Left lung (tissue), 14 donors: ENCODE measurements at regions of chr12 and their contacts with region 1.

Region 1: GRCh38 chr12:14739489-14739888 is 43.1 kb upstream of the GUCY2C start:
- DNase-seq: no peak
- ATAC-seq: no peak
- H3K4me3 ChIP-seq: no peak overlapping the region
- H3K27ac ChIP-seq: no peak overlapping the region
- H3K4me1 ChIP-seq: no peaks in the 10 kb centered on the region
- H3K27me3 ChIP-seq: no peaks in the 10 kb centered on the region
- CTCF ChIP-seq: no peak

Region 2: DNA sequence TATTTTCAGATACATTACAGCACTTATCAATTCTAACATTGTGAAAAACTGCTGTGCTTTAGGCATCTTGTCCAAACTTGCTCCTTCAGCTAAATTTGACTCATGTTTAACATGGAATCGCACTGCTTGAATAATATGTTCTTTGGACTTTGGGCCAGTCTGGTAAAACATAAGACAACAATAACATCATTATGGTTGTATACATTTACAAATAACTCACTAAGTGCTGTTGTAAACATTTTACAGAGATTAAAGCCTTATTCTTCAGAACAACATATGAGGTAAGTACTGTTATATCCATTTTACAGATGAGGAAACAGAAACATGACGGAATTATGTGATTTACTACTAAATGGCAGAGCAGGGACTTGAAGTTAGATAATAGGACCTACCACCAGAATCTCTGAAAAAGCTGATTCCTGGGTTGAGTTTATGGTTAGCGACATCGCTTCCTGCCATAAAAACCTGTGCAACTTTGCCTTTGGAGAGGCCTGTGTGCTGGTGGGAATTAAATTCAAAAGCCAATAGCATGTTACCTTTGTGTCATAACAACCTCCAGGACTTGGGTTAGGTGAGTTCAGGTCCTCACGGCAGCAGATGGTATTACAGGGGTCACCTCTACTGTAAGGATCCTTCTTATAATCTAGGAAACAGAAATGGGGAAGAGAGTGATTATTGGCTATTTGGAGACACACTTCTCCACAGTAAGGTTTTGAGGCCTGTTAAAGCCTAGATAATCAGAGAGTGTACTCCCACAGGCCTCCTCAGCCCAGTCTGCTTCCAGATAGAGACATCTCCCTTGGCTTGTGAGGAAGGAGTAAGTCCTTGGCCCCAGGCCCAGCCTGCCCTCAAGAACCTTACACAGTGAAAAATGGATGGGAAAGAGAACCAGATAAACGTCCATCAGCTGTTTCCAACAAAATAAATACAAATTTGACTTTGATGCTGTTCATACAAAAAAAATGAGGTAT is 233.6 kb before region 1 on chr12:
- intact Hi-C with region 1: no loop called
- DNase-seq: no peak
- ATAC-seq: no peak
- H3K4me3 ChIP-seq: no peak overlapping the region
- H3K27ac ChIP-seq: no peak overlapping the region
- H3K4me1 ChIP-seq: no peaks in the 10 kb centered on the region
- H3K27me3 ChIP-seq: no peaks in the 10 kb centered on the region
- CTCF ChIP-seq: no peak

Region 3: GRCh38 chr12:14989790-14990189 is 250.3 kb after region 1 on chr12:
- intact Hi-C with region 1: loop called in 1 of 2 experiments (anchors 10 kb)
- DNase-seq: no peak
- ATAC-seq: no peak
- H3K4me3 ChIP-seq: no peak overlapping the region
- H3K27ac ChIP-seq: no peak overlapping the region
- H3K4me1 ChIP-seq: peaks cover 3 to 48% of the 10 kb centered on the region in 2 donors
- H3K27me3 ChIP-seq: no peaks in the 10 kb centered on the region
- CTCF ChIP-seq: no peak